Activated CD4-positive, alpha-beta T cell treated with anti-CD3 and anti-CD28 coated beads for 36 hours (primary cell): ENCODE measurements at regions of chr1 and their contacts with region 1.

Region 1: GRCh38 chr1:41751804-41752513 is 166.8 kb downstream of the HIVEP3 start:
- DNase-seq: peak; percentile 30
- ATAC-seq: peak; percentile 17
- H3K4me3 Mint-ChIP-seq: no peak overlapping the region
- H3K27ac Mint-ChIP-seq: peak overlapping the region; percentile 90
- H3K4me1 Mint-ChIP-seq: peaks cover 73% of the 10 kb centered on the region
- H3K27me3 Mint-ChIP-seq: no peaks in the 10 kb centered on the region

Region 2: DNA sequence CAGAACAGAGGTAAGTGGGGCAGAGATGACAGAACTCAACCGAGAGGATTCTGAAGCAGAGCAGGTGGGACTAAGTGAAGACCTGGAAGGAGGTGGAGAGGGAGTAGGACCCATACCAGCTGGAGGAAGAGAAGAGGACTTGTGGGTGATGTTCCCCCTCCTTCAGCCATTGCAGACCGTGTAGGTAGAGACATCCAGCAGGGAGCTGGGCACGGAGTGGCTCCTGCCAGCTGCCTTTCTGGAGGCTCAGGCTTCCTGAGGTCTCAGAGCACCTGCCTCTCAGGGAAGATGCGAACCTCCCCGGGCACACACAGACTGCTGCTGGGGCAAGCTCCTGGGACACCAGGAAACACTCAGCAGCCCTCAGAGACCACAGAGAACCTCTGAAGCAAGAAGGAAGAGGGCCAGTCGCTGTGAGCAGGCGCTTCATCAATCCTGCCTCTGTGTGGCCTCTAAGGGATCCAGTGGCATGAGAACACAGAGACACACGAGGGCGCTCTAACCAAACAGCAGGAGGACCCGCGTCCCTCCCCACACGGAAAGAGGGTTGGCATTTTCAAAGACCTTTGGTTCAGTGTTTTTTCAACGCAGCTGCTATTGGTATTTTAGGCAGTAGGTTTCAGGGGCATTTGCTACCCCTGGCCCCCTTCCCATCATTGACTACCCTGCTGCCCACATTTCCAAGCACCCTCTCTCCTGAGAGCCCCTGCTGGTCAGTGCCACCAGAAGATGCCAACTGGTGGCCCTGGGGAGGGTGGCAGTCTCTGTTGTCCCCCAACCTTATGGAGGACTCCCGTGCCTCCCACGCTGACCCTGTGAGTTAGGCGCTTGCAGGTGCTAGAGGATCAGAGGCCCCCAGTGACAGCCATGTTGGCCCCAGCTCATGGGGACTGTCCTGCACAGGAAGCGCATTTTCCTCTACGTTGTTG is 177.9 kb before region 1 on chr1:
- CTCF ChIA-PET with region 1: no interaction called
- POLR2A ChIA-PET with region 1: no interaction called
- intact Hi-C with region 1: loop called (anchors 5 to 10 kb)
- DNase-seq: peak; percentile 90
- ATAC-seq: peak; percentile 93
- H3K4me3 Mint-ChIP-seq: no peak overlapping the region
- H3K27ac Mint-ChIP-seq: peak overlapping the region; percentile 17
- H3K4me1 Mint-ChIP-seq: peaks cover 41% of the 10 kb centered on the region
- H3K27me3 Mint-ChIP-seq: no peaks in the 10 kb centered on the region

Region 3: DNA sequence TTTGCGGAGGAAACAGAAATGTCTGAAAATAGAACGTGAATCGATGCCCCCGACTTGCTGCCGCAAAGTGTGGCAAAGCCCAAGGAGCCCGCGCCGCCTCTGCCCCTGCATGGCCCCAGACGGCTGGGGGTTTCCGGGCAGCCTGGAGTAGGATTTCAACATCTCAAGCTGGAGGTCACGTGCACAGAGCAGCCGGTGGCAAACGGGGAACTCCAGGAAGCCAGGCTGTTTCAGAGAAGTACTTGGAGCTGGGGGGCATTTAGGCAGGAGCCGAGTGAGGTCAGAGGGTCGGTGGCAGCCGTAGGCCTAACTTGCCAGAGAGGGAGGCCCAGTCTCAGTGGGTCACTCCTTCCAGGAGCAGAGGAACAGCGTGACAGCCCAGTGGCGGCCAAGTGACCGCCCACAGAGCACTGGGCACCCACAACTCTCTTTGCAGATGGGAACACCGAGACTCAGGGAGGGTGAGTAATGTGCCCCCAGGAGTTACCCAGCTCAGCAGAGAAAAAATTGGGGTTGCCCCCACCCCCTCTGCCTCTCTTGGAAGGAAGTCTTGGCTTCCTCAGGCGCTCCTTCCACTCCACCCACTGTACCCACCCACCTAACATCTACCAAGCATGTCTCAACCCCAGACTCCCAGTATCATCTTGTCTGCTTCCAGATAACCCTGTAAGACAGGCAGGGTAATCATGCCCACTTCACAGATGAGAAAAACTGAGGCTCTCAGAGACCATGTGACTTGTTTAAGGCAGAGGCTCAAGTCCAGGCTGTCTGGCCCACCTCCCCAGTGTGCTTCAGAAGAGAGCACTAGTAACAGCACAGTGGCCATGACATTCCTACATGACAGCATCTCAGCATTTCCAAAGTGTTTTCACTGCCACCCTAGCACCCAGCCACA is 12.7 kb before region 1 on chr1:
- CTCF ChIA-PET with region 1: interaction called, 8 read pairs
- POLR2A ChIA-PET with region 1: interaction called, 6 read pairs
- intact Hi-C with region 1: loop called (anchors 1 kb)
- DNase-seq: peak; percentile 95
- ATAC-seq: peak; percentile 50
- H3K4me3 Mint-ChIP-seq: peak overlapping the region; percentile 58
- H3K27ac Mint-ChIP-seq: peak overlapping the region; percentile 91
- H3K4me1 Mint-ChIP-seq: peaks cover 92% of the 10 kb centered on the region
- H3K27me3 Mint-ChIP-seq: no peaks in the 10 kb centered on the region

Region 4: DNA sequence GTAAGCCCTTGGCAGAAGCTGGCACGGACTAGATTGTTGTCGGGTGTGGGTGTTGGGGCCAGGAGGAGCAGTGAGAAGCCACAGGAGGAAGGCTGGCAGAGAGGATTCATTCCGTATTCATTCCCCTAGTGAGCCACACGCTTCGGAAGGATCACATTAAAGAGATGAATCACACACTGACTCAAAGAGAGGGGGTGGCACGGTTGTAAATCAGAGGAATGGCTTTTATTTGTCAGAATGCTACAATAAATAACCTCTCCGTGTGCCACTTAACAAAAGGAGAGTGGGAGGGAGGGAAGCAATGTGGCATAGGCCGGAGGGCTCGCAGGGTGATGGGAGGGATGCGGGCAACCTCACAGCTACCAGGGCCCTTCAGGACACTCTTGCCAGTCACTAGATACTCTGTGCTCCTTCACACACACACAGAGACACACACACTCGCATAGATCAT is 31.3 kb after region 1 on chr1:
- CTCF ChIA-PET with region 1: interaction called, 3 read pairs
- POLR2A ChIA-PET with region 1: no interaction called
- intact Hi-C with region 1: loop called in 1 of 2 experiments (anchors 1 kb)
- DNase-seq: peak; percentile 78
- ATAC-seq: peak; percentile 98
- H3K4me3 Mint-ChIP-seq: peak overlapping the region; percentile 64
- H3K27ac Mint-ChIP-seq: peak overlapping the region; percentile 86
- H3K4me1 Mint-ChIP-seq: peaks cover 35% of the 10 kb centered on the region
- H3K27me3 Mint-ChIP-seq: no peaks in the 10 kb centered on the region

Region 5: DNA sequence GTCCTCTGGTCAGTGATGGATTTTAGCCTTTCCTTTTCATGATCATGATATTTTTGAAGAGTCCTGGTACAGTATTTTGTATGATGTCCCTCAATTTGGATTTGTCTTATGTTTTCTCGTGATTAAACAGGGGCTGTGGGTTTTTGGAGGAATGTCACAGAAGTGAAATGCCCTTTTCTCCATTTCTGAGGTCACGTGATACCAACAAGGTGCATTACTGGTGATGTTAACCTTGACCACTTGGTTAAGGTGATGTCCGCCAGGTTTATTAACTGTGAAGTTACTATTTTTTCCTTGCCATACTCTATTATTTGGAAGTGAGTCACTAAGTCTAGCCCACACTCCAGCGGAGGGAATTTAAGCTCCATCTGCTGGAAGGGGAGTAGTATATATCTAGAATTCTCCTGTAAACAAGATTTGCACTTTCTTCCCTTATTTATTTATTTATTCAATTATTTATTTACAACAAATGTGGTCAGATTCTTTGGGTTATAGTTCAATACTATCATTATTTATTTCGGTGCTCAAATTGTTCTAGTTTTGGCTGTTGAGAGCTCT is 43.3 kb after region 1 on chr1:
- CTCF ChIA-PET with region 1: no interaction called
- POLR2A ChIA-PET with region 1: no interaction called
- intact Hi-C with region 1: loop called in 1 of 2 experiments (anchors 5 kb)
- DNase-seq: no peak
- ATAC-seq: no peak
- H3K4me3 Mint-ChIP-seq: no peak overlapping the region
- H3K27ac Mint-ChIP-seq: no peak overlapping the region
- H3K4me1 Mint-ChIP-seq: peaks cover 62% of the 10 kb centered on the region
- H3K27me3 Mint-ChIP-seq: no peaks in the 10 kb centered on the region

Region 6: GRCh38 chr1:41802532-41803501 is 50.9 kb after region 1 on chr1:
- CTCF ChIA-PET with region 1: no interaction called
- POLR2A ChIA-PET with region 1: no interaction called
- intact Hi-C with region 1: loop called (anchors 1 to 2 kb)
- DNase-seq: no peak
- ATAC-seq: no peak
- H3K4me3 Mint-ChIP-seq: no peak overlapping the region
- H3K27ac Mint-ChIP-seq: peak overlapping the region; percentile 47
- H3K4me1 Mint-ChIP-seq: peaks cover 81% of the 10 kb centered on the region
- H3K27me3 Mint-ChIP-seq: no peaks in the 10 kb centered on the region

Region 7: DNA sequence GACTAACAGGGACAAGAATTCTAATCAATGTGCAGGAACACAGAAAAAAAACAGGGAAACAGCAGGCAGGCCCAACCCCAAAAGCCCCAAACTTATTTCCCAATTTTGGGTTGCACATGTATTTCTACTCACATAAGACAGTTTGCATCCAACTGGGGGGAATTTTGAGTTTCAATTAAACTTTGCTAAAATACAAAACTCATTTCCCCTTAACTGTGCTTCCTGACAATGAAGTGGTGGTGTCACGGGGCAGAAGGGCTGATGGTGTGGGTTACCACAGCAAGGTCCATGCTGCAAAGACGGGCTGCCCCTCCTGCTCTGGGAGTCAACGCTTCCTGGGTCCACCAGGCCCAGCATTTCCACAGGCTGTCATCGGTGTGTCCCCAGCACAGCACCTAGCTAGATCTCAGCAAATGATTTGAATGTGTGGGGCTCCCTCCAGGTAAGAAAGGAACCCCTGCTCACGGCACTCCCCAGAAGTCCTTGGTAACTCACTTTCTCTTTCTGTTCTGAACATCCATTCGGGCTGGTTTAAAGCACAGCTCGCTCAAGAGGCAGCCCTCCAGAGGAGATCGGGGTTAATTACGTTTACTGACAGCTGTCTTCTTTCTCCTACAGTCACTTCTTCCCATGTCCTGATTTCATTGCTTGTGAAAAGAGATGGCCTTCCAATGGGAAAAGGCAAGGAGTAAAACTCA is 139.4 kb after region 1 on chr1:
- CTCF ChIA-PET with region 1: interaction called, 3 read pairs
- POLR2A ChIA-PET with region 1: no interaction called
- intact Hi-C with region 1: loop called in 1 of 2 experiments (anchors 1 kb)
- DNase-seq: peak; percentile 72
- ATAC-seq: peak; percentile 96
- H3K4me3 Mint-ChIP-seq: peak overlapping the region; percentile 78
- H3K27ac Mint-ChIP-seq: peak overlapping the region; percentile 95
- H3K4me1 Mint-ChIP-seq: peaks cover 50% of the 10 kb centered on the region
- H3K27me3 Mint-ChIP-seq: no peaks in the 10 kb centered on the region